Left lung (tissue), 14 donors: ENCODE measurements at regions of chr1 and their contacts with region 1.

Region 1: GRCh38 chr1:64675718-64676345 is 69.0 kb upstream of the RAVER2 start:
- DNase-seq: no peak
- ATAC-seq: peak; percentile 53
- H3K4me3 ChIP-seq: no peak overlapping the region
- H3K27ac ChIP-seq: no peak overlapping the region
- H3K4me1 ChIP-seq: no peaks in the 10 kb centered on the region
- H3K27me3 ChIP-seq: no peaks in the 10 kb centered on the region
- CTCF ChIP-seq: peak; percentile 55 to 68

Region 2: DNA sequence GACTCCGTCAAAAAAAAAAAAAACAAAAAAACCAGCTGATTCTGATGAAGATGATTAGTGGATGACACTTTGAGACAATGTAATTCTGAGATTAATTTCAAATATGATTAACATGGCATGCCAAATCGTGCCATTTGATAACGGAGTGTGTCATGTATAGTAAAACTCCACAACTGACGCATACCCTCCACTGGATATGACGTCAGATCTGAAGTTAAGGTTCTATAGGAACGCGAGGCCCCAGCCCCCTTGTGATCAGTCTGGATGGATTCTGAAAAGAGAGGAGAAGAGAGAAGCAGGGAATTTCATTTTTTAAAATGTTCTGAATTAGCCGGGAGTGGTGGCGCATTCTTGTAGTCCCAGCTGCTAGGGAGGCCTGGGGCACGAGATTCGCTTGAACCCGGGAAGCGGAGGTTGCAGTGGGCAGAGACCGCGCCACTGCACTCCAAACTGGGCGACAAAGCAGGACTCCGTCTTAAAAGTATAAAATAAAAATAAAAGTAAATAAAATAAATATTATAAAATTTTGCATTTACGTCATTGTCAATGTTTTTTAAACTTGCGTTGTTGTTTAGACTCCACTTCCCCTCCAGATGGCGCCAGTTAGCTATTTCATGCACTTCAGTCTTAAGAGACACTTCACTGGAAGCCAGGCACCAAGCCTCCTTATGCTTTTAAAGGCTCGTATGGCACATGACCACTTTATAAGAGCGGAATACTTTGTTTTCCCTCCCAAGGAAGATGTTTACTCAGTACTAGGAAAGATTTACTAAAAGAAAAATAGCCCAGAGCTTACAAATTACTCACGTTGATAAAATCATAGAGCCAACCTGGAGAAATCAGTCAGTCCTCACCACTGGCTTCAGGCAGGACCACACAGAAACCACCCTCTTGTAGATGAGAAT is 406.9 kb before region 1 on chr1:
- intact Hi-C with region 1: loop called in 1 of 2 experiments (anchors 10 kb)
- DNase-seq: peak; percentile 66 to 91 (median 72)
- ATAC-seq: peak; percentile 97
- H3K4me3 ChIP-seq: no peak overlapping the region
- H3K27ac ChIP-seq: no peak overlapping the region
- H3K4me1 ChIP-seq: peaks cover 0 to 6% of the 10 kb centered on the region in 2 donors
- H3K27me3 ChIP-seq: no peaks in the 10 kb centered on the region
- CTCF ChIP-seq: peak; percentile 68 to 83

Region 3: DNA sequence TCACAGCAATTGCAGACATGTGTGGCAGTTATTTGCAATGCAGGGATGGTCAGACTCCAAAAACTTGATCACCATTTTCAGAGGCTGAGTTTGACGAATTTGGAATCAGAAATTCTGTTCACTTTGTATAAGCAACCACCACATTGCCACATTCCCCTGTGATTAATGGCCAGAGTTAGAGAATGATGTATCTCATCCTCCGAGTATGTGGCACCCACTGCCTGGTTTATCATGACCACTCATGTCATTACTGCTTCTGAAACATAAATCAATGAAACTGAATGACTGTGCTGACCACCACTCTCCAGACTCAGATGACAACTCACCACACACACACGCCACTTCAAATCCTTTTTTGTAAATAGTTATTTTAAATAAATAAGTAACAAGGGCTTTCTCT is 272.5 kb before region 1 on chr1:
- intact Hi-C with region 1: no loop called
- DNase-seq: no peak
- ATAC-seq: no peak
- H3K4me3 ChIP-seq: no peak overlapping the region
- H3K27ac ChIP-seq: no peak overlapping the region
- H3K4me1 ChIP-seq: no peaks in the 10 kb centered on the region
- H3K27me3 ChIP-seq: no peaks in the 10 kb centered on the region
- CTCF ChIP-seq: no peak

Region 4: GRCh38 chr1:64539781-64540218 is 136.0 kb before region 1 on chr1:
- intact Hi-C with region 1: no loop called
- DNase-seq: peak in 3 of 4 donors; percentile 40 to 71 (median 44)
- ATAC-seq: no peak
- H3K4me3 ChIP-seq: peak overlapping the region in 1 of 2 donors; percentile 7
- H3K27ac ChIP-seq: peak overlapping the region; percentile 67 to 68
- H3K4me1 ChIP-seq: peaks cover 18 to 45% of the 10 kb centered on the region in 2 donors
- H3K27me3 ChIP-seq: no peaks in the 10 kb centered on the region
- CTCF ChIP-seq: no peak

Region 5: GRCh38 chr1:64721576-64722145 is 45.8 kb after region 1 on chr1:
- intact Hi-C with region 1: no loop called
- DNase-seq: no peak
- ATAC-seq: no peak
- H3K4me3 ChIP-seq: no peak overlapping the region
- H3K27ac ChIP-seq: no peak overlapping the region
- H3K4me1 ChIP-seq: no peaks in the 10 kb centered on the region
- H3K27me3 ChIP-seq: no peaks in the 10 kb centered on the region
- CTCF ChIP-seq: no peak